Activated CD4-positive, alpha-beta T cell treated with anti-CD3 and anti-CD28 coated beads, Interleukin-2, amount 10 ng/mL, durations not matched to agents 7 days and 5 days (primary cell): ENCODE measurements at regions of chr1 and their contacts with region 1.

Region 1: DNA sequence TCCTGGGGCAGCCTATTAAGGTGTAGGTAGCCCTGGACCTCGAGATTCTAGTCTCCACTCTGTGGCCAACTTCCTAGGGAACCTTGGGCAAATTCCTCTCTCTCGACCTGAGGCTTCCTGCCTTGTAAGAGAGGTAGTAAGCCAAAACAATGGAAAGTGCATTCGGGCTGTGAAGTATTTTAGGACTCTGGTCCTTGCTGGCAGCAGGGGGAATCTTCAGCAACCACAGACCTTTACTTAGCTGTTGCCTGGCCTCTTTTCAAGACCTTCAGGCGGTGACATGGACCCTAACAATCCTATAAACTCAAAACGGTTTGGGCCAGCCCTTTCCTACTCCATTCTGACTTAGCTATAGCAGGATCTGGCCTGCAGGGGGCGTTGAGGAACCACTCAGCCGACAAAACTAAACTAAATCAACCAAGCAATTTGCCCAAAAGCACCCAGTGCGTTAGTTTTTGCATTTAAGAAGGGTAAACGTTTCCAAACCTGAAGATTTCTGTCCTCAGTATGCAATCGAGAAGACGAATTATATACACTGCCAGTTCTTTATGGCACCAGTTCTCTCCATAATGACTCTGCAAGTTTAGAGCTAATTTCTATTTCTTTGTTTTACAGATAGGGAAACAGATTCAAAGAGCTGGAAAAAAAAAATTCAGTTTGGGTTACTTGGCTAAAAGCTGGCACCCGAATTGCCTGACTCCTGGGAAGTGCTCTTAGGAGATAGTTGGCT is 10.9 kb upstream of the SESN2 start:
- DNase-seq: peak; percentile 89
- H3K4me3 Mint-ChIP-seq: peak overlapping the region; percentile 83
- H3K27ac Mint-ChIP-seq: peak overlapping the region; percentile 98
- H3K4me1 Mint-ChIP-seq: peaks cover 53% of the 10 kb centered on the region
- H3K27me3 Mint-ChIP-seq: no peaks in the 10 kb centered on the region

Region 2: GRCh38 chr1:28235755-28236655 is 12.4 kb before region 1 on chr1 and contains the start of gene ATP5IF1:
- CTCF ChIA-PET with region 1: interaction called, 35 read pairs
- POLR2A ChIA-PET with region 1: interaction called, 3 read pairs
- DNase-seq: peak; percentile 96
- H3K4me3 Mint-ChIP-seq: no peak within 1 kb of the TSS
- H3K27ac Mint-ChIP-seq: peak within 1 kb of the TSS; percentile 5
- H3K4me1 Mint-ChIP-seq: peaks cover 17% of the 10 kb centered on the region
- H3K27me3 Mint-ChIP-seq: no peaks in the 10 kb centered on the region
- total RNA-seq, gene ATP5IF1: 172 to 189 TPM

Region 3: DNA sequence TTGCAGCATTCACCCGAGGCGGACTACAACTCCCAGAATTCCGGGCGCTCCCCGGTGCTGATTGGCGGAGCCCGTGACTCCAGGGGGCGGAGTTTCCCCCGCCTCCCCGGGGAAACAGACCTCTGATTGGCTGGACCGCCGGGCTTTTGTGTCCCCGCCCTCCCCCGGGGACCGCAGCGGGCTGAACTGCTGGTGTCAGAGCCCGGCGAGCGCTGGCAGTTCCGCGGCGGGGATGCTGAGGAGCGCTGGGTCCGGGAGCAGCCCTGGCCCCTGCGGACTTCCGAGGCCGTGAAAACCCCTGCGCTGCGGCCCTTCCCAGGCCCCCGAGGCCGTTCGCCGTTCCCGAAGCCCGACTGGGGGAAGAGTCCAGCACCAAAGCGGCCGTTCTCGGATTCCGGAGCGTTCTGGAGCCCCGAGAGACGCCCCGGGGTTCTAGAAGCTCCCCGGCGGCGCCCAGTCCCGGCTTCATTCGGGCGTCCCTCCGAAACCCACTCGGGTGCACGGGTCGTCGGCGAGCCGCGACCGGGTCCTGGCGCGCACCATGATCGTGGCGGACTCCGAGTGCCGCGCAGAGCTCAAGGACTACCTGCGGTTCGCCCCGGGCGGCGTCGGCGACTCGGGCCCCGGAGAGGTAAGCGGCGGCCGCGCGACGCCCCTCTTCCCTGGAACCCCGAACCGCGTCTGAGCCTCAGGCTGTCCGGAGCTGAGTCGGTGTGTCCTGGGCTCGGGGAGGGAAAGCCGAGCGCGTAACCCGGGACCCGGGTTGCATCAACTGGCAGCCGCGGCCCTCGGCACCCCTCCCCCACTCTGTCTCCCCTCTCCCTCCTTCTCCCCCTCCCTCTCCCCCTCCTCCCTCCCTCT is 11.1 kb after region 1 on chr1 and contains the start of gene SESN2:
- CTCF ChIA-PET with region 1: interaction called, 31 read pairs
- POLR2A ChIA-PET with region 1: interaction called, 4 read pairs
- DNase-seq: peak; percentile 100
- H3K4me3 Mint-ChIP-seq: peak within 1 kb of the TSS; percentile 79
- H3K27ac Mint-ChIP-seq: peak within 1 kb of the TSS; percentile 85
- H3K4me1 Mint-ChIP-seq: peaks cover 47% of the 10 kb centered on the region
- H3K27me3 Mint-ChIP-seq: peaks cover 2% of the 10 kb centered on the region
- total RNA-seq, gene SESN2: 11.7 to 11.8 TPM

Region 4: GRCh38 chr1:28280501-28280900 is 32.1 kb after region 1 on chr1:
- CTCF ChIA-PET with region 1: interaction called, 10 read pairs
- POLR2A ChIA-PET with region 1: no interaction called
- DNase-seq: no peak
- H3K4me3 Mint-ChIP-seq: no peak overlapping the region
- H3K27ac Mint-ChIP-seq: no peak overlapping the region
- H3K4me1 Mint-ChIP-seq: peaks cover 8% of the 10 kb centered on the region
- H3K27me3 Mint-ChIP-seq: no peaks in the 10 kb centered on the region

Region 5: DNA sequence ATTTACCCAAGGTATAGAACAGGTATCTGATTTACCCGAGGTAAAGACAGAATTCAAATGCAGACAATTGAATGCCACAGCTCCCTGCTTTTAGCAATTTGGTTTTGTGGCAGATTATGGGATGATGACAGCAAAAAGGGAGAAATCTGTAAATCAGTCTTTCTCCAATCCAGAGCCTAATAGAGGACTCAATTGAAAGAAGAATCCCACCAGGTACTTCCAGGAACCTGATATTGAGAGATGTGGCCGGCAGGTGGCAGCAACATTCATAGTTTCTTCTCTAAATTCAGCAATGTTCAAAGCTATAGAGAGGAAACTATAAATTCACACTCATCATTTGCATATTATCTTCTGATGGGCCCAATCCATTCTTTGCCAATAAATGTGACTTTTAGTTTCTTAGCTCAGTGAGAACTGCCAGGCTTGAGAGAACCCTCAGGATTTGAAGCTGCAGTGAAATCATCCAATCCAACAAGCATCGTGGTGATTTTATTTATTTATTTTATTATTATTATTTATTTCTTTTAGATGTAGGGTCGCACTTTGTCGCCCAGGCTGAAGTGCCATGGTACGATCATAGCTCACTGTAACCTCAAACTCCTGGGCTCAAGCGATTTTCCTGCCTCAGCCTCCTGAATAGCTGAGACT is 111.3 kb after region 1 on chr1:
- CTCF ChIA-PET with region 1: interaction called, 12 read pairs
- POLR2A ChIA-PET with region 1: no interaction called
- DNase-seq: peak; percentile 81
- H3K4me3 Mint-ChIP-seq: no peak overlapping the region
- H3K27ac Mint-ChIP-seq: no peak overlapping the region
- H3K4me1 Mint-ChIP-seq: peaks cover 8% of the 10 kb centered on the region
- H3K27me3 Mint-ChIP-seq: peaks cover 3% of the 10 kb centered on the region